ENCODE measurements at regions of chr9 and their contacts with region 1.

Region 1: GRCh38 chr9:127311239-127311741 is 46.7 kb downstream of the GARNL3 start:
- DNase-seq: peak; percentile 74
- H3K4me3 ChIP-seq: no peak overlapping the region
- H3K27ac ChIP-seq: no peak overlapping the region
- H3K4me1 ChIP-seq: peaks cover 5% of the 10 kb centered on the region
- H3K27me3 ChIP-seq: no peaks in the 10 kb centered on the region
- CTCF ChIP-seq: peak; percentile 44 to 56
- POLR2A ChIP-seq: no peak

Region 2: GRCh38 chr9:127336738-127337251 is 25.5 kb after region 1 on chr9:
- CTCF ChIA-PET with region 1: interaction called, 6 read pairs
- POLR2A ChIA-PET with region 1: no interaction called
- dilution Hi-C with region 1: no loop called
- intact Hi-C with region 1: loop called (anchors 2 kb)
- DNase-seq: peak; percentile 98
- H3K4me3 ChIP-seq: peak overlapping the region in 1 of 3 experiments; percentile 16
- H3K27ac ChIP-seq: peak overlapping the region; percentile 99
- H3K4me1 ChIP-seq: peaks cover 40% of the 10 kb centered on the region
- H3K27me3 ChIP-seq: no peaks in the 10 kb centered on the region
- CTCF ChIP-seq: no peak
- POLR2A ChIP-seq: peak; percentile 56

Region 3: DNA sequence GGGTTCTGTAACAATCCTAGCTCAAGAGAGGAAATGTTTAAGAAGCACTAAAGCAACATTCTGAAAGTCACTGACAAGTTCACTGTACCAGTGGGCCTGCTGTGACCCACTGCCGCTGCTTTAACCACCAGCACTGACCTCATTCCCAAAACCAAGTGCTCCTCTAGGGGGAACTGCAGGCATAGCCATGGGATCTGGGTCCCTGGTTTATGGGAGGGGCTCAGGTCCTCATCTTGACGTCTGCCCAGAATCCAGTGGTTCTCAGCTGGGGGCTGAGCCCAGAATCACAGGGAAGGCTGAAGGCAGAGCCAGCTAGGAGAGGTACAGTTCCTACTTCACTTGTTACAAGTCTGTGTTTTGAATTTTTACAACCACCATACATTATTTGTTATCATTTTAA is 49.5 kb after region 1 on chr9:
- CTCF ChIA-PET with region 1: interaction called, 14 read pairs
- POLR2A ChIA-PET with region 1: no interaction called
- dilution Hi-C with region 1: no loop called
- intact Hi-C with region 1: loop called (anchors 1 kb)
- DNase-seq: no peak
- H3K4me3 ChIP-seq: no peak overlapping the region
- H3K27ac ChIP-seq: no peak overlapping the region
- H3K4me1 ChIP-seq: no peaks in the 10 kb centered on the region
- H3K27me3 ChIP-seq: no peaks in the 10 kb centered on the region
- CTCF ChIP-seq: no peak
- POLR2A ChIP-seq: no peak

Region 4: DNA sequence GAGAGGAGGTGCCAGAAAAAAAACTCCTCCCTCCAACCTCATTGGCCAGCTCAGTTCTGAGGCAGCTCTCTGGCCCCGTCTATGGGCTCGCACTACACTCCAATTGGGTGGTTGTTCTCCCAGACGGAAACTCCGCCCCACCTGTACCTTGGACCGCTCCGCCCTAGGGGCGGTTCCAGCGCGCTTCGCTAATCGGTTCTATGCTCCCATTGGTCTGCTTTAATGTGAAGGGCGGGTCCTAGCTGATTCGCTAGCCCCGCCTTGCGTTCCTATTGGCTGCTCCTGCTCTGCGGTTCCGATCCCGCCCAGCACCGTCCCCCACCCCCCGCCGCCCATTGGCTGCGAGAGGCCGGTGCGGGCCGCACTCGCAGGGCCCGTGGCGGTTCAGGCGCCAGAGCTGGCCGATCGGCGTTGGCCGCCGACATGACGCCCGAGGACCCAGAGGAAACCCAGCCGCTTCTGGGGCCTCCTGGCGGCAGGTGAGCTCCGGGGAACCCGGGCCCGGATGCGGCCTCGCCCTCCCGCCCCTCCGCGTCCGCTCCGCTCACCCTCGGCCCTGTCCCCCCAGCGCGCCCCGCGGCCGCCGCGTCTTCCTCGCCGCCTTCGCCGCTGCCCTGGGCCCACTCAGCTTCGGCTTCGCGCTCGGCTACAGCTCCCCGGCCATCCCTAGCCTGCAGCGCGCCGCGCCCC is 85.7 kb after region 1 on chr9 and contains the start of gene SLC2A8:
- CTCF ChIA-PET with region 1: interaction called, 17 read pairs
- POLR2A ChIA-PET with region 1: no interaction called
- dilution Hi-C with region 1: no loop called
- intact Hi-C with region 1: loop called (anchors 1 kb)
- DNase-seq: peak; percentile 100
- H3K4me3 ChIP-seq: peak within 1 kb of the TSS; percentile 42 to 85 (median 60)
- H3K27ac ChIP-seq: peak within 1 kb of the TSS; percentile 5
- H3K4me1 ChIP-seq: peaks cover 9% of the 10 kb centered on the region
- H3K27me3 ChIP-seq: peaks cover 2 to 4% of the 10 kb centered on the region in 2 experiments
- CTCF ChIP-seq: no peak
- POLR2A ChIP-seq: peak; percentile 62
- total RNA-seq, gene SLC2A8: 17.0 and 19.3 TPM in 2 replicates

Region 5: DNA sequence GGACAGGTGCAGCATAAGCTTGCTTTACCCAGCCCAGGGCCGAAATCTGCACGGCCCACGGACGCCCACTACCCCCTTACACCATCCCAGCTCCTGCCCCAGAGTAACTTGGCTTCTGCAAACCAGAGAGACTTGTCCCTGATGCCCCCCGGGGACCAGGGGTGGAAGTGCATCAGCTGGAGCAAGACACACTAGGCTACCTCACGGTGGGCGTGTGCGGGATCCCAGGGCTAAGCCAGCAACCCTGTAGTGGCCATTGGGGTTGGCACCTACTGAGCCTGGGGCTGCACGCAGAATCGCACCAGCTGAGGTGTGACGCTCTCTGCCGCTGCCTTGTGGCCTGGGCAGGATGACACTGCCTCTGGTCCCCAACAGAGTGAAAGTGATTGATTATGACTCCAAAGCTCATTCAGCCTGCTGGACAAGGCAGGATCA is 106.8 kb after region 1 on chr9:
- CTCF ChIA-PET with region 1: no interaction called
- POLR2A ChIA-PET with region 1: no interaction called
- dilution Hi-C with region 1: no loop called
- intact Hi-C with region 1: loop called (anchors 1 kb)
- DNase-seq: peak; percentile 15
- H3K4me3 ChIP-seq: no peak overlapping the region
- H3K27ac ChIP-seq: no peak overlapping the region
- H3K4me1 ChIP-seq: peaks cover 8% of the 10 kb centered on the region
- H3K27me3 ChIP-seq: no peaks in the 10 kb centered on the region
- CTCF ChIP-seq: peak in 1 of 2 donors; percentile 22
- POLR2A ChIP-seq: no peak